Activated B cell treated with CpG ODN at 0.5 μM for 24 hours (primary cell): ENCODE measurements at regions of chr1 and their contacts with region 1.

Region 1: GRCh38 chr1:235954306-235955283 is 87.9 kb upstream of the LYST start:
- DNase-seq: peak; percentile 70
- ATAC-seq: peak; percentile 95
- H3K4me3 Mint-ChIP-seq: peak overlapping the region; percentile 58
- H3K27ac Mint-ChIP-seq: peak overlapping the region; percentile 81
- H3K4me1 Mint-ChIP-seq: peaks cover 69% of the 10 kb centered on the region
- H3K27me3 Mint-ChIP-seq: no peaks in the 10 kb centered on the region
- CTCF ChIP-seq: no peak

Region 2: GRCh38 chr1:235527196-235527814 is 427.3 kb before region 1 on chr1:
- CTCF ChIA-PET with region 1: no interaction called
- POLR2A ChIA-PET with region 1: no interaction called
- intact Hi-C with region 1: no loop called
- DNase-seq: no peak
- ATAC-seq: no peak
- H3K4me3 Mint-ChIP-seq: no peak overlapping the region
- H3K27ac Mint-ChIP-seq: no peak overlapping the region
- H3K4me1 Mint-ChIP-seq: no peaks in the 10 kb centered on the region
- H3K27me3 Mint-ChIP-seq: peaks cover 4% of the 10 kb centered on the region
- CTCF ChIP-seq: no peak

Region 3: GRCh38 chr1:235843461-235843961 is 111.1 kb before region 1 on chr1:
- CTCF ChIA-PET with region 1: interaction called, 12 read pairs
- POLR2A ChIA-PET with region 1: interaction called, 9 read pairs
- intact Hi-C with region 1: no loop called
- DNase-seq: no peak
- ATAC-seq: peak; percentile 60
- H3K4me3 Mint-ChIP-seq: no peak overlapping the region
- H3K27ac Mint-ChIP-seq: peak overlapping the region; percentile 62
- H3K4me1 Mint-ChIP-seq: peaks cover 86% of the 10 kb centered on the region
- H3K27me3 Mint-ChIP-seq: no peaks in the 10 kb centered on the region
- CTCF ChIP-seq: no peak

Region 4: DNA sequence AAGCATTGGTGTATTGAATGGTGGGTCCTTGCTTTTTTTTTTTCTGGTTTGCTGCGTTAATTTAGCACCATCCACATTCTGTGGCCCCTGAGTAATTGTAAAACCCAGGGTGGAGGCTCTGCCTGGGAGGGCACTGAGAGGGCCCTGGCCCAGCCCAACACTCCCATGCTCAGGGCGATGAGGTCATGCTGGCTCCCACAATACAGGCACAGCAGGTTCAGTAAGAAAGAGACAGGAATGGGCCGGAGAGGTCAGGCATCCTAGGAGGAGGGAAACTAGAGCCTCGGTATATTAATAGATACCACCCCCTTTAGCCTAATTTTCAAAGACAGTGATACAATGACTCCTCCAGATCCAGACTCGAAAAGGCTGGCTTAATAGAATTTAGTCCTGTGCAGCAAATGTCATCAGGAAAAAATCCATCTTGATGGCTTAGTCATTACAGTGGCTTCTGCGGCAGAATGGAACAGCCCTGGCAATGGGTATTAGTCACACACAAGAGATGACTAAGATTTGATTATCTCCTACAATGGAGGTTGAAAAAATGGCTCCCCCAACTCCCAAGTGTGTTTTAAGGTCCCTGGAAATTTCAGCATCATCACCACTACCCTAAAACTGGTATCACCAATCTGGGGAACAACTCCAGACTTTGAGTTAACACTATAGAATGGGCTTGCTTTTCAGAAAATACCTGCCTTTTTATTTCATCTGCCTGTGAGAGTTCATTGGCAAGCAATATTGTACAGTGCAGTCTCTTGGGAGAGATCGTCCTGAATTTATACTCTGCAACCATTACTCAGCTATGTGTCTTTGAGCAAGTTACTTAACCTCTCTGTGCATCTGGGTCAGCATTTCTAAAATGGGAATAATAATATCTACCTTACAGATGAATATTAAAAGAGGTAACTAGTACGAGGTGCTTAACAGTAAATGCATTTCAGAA is 44.0 kb before region 1 on chr1:
- CTCF ChIA-PET with region 1: no interaction called
- POLR2A ChIA-PET with region 1: interaction called, 12 read pairs
- intact Hi-C with region 1: no loop called
- DNase-seq: no peak
- ATAC-seq: peak; percentile 37
- H3K4me3 Mint-ChIP-seq: no peak overlapping the region
- H3K27ac Mint-ChIP-seq: no peak overlapping the region
- H3K4me1 Mint-ChIP-seq: peaks cover 8% of the 10 kb centered on the region
- H3K27me3 Mint-ChIP-seq: no peaks in the 10 kb centered on the region
- CTCF ChIP-seq: no peak

Region 5: GRCh38 chr1:235938709-235939479 is 15.7 kb before region 1 on chr1:
- CTCF ChIA-PET with region 1: interaction called, 13 read pairs
- POLR2A ChIA-PET with region 1: interaction called, 29 read pairs
- intact Hi-C with region 1: loop called (anchors 1 kb)
- DNase-seq: no peak
- ATAC-seq: peak; percentile 80
- H3K4me3 Mint-ChIP-seq: peak overlapping the region; percentile 76
- H3K27ac Mint-ChIP-seq: peak overlapping the region; percentile 86
- H3K4me1 Mint-ChIP-seq: peaks cover 90% of the 10 kb centered on the region
- H3K27me3 Mint-ChIP-seq: no peaks in the 10 kb centered on the region
- CTCF ChIP-seq: no peak